Heart left ventricle (tissue), 16 donors: ENCODE measurements at regions of chr9 and their contacts with region 1.

Region 1: GRCh38 chr9:11128156-11128555 is 515.4 kb upstream of the PTPRD start:
- DNase-seq: no peak
- ATAC-seq: no peak
- H3K4me3 ChIP-seq: no peak overlapping the region
- H3K27ac ChIP-seq: no peak overlapping the region
- H3K4me1 ChIP-seq: no peaks in the 10 kb centered on the region
- H3K27me3 ChIP-seq: no peaks in the 10 kb centered on the region
- CTCF ChIP-seq: no peak
- POLR2A ChIP-seq: no peak

Region 2: GRCh38 chr9:11064897-11065296 is 63.3 kb before region 1 on chr9:
- intact Hi-C with region 1: no loop called
- DNase-seq: no peak
- ATAC-seq: no peak
- H3K4me3 ChIP-seq: no peak overlapping the region
- H3K27ac ChIP-seq: no peak overlapping the region
- H3K4me1 ChIP-seq: no peaks in the 10 kb centered on the region
- H3K27me3 ChIP-seq: no peaks in the 10 kb centered on the region
- CTCF ChIP-seq: no peak
- POLR2A ChIP-seq: no peak

Region 3: GRCh38 chr9:11097020-11097419 is 31.1 kb before region 1 on chr9:
- intact Hi-C with region 1: no loop called
- DNase-seq: no peak
- ATAC-seq: no peak
- H3K4me3 ChIP-seq: no peak overlapping the region
- H3K27ac ChIP-seq: no peak overlapping the region
- H3K4me1 ChIP-seq: no peaks in the 10 kb centered on the region
- H3K27me3 ChIP-seq: no peaks in the 10 kb centered on the region
- CTCF ChIP-seq: no peak
- POLR2A ChIP-seq: no peak

Region 4: DNA sequence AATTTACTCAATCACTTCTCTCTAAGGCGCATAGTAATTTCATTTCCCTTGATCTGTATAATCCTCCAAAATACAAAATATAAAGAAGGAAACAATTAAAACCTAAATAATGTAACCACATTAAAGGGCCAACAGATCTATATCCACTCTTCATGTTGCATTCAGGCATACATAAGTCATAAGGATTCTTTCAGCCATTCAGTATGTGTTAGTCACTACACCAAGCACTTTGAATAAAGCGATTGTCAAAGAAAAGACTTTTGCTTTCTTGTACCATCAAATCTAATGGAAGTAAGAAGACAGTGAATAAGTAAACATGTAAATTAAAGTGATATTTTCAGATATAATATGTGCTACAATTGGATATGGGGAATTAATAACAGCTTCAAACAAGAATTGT is 53.8 kb after region 1 on chr9:
- intact Hi-C with region 1: loop called in 1 of 10 experiments (anchors 10 kb)
- DNase-seq: no peak
- ATAC-seq: no peak
- H3K4me3 ChIP-seq: no peak overlapping the region
- H3K27ac ChIP-seq: no peak overlapping the region
- H3K4me1 ChIP-seq: no peaks in the 10 kb centered on the region
- H3K27me3 ChIP-seq: no peaks in the 10 kb centered on the region
- CTCF ChIP-seq: no peak
- POLR2A ChIP-seq: no peak